ENCODE measurements at regions of chr11 and their contacts with region 1.

Region 1: DNA sequence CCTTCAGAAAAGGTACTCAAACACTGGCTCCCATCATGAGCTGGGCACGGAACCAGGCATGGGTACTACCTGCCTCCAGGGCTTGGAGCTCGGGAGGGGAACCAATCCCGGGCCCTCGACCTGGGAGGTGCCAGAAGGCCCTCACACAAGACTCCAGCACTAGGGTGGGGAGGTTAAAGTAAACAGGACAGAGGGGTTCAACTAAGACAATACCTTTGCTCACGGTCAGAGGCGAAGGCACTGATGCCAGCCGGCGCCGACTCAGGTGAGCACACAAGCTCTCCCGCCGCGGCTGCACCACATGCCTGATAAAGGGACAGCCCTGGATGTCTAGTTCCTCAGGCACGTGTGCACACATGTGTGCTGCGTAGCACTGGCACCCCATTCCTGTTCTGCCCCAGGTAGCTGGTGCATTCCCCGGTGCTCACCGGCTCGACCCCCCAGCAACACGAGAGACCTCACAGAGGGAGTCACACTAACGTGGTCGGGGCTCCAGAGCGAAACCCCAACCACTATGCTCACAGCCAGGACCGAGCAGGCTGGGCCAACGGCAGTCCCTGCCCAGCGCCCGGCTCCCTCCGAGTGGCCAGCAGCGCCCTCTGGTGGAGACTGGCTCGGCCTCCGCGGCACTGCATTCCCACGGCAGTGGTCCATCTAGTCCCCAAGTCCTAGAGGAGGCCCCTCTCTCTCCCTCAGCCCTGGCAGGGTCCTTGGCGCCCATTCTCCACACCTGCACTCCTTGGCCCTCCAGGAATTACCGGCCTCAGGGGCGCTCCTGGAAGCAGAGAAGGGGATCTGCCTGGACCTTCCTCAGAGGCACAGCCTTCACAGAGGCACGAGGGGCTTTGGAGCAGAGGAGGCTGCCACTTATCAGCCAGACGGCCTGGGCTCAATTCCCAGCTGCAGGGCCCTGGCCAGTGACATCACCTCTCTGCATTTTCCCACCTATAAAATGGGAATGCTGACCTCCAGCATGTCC is 28.8 kb upstream of the MOB2 start:
- DNase-seq: no peak
- H3K4me3 ChIP-seq: peak overlapping the region; percentile 11 to 41 (median 15)
- H3K27ac ChIP-seq: peak overlapping the region in 1 of 4 donors; percentile 34
- H3K4me1 ChIP-seq: peaks cover 50 to 99% (median 83%) of the 10 kb centered on the region in 4 donors
- H3K27me3 ChIP-seq: no peaks in the 10 kb centered on the region
- CTCF ChIP-seq: peak; percentile 88 to 98 (median 94)
- EP300 ChIP-seq: no peak
- POLR2A ChIP-seq: no peak

Region 2: DNA sequence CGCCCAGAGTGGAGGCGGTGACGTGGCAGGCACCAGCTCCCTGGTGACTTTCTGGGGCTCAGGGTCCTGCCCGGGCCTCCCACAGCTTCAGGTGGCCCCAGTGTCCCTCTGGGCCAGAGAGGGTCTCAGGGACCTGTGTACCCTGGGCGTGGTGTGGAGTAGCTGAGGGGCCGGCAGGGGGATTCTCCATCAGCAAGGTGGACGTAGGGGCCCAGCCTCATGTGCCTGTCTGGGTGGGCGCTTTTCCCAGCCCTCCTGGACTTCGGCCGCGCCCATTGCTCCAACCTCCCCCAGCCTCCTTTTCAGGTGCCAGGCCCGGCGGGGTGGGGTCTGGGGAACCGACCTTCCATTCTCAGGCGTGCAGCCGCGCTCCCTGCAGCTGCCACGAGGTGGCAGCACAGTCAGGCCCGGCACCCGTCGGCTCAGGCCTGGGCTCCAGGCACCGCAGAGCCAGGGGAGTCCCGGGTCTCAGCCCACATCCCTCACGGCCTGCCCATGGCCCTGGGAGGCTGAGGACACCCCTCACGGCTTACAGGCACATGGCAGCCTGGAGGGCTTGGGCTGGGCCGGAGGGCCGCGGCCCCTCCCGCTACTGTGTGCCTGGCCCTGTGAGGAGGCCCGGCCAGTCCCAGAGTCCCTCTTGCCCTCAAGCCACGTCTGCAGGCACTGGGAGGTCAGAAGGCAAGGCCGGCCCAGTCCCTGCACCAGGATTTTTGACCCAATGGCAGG is 312.4 kb before region 1 on chr11:
- intact Hi-C with region 1: loop called (anchors 2 kb)
- DNase-seq: no peak
- H3K4me3 ChIP-seq: no peak overlapping the region
- H3K27ac ChIP-seq: no peak overlapping the region
- H3K4me1 ChIP-seq: peaks cover 3 to 13% (median 9%) of the 10 kb centered on the region in 4 donors
- H3K27me3 ChIP-seq: peaks cover 0 to 60% (median 17%) of the 10 kb centered on the region in 4 donors
- CTCF ChIP-seq: peak; percentile 84 to 97 (median 89)
- EP300 ChIP-seq: no peak
- POLR2A ChIP-seq: no peak

Region 3: GRCh38 chr11:1335811-1336761 is 179.3 kb before region 1 on chr11:
- intact Hi-C with region 1: no loop called
- DNase-seq: peak; percentile 94
- H3K4me3 ChIP-seq: peak overlapping the region; percentile 59 to 71 (median 64)
- H3K27ac ChIP-seq: peak overlapping the region; percentile 82 to 89 (median 88)
- H3K4me1 ChIP-seq: peaks cover 17 to 27% (median 26%) of the 10 kb centered on the region in 4 donors
- H3K27me3 ChIP-seq: no peaks in the 10 kb centered on the region
- CTCF ChIP-seq: no peak
- EP300 ChIP-seq: no peak
- POLR2A ChIP-seq: peak; percentile 34

Region 4: GRCh38 chr11:1453611-1454034 is 61.7 kb before region 1 on chr11:
- intact Hi-C with region 1: loop called (anchors 2 kb)
- DNase-seq: no peak
- H3K4me3 ChIP-seq: no peak overlapping the region
- H3K27ac ChIP-seq: no peak overlapping the region
- H3K4me1 ChIP-seq: peaks cover 13 to 38% (median 25%) of the 10 kb centered on the region in 4 donors
- H3K27me3 ChIP-seq: peaks cover 0 to 23% (median 0%) of the 10 kb centered on the region in 4 donors
- CTCF ChIP-seq: peak; percentile 58 to 67 (median 61)
- EP300 ChIP-seq: no peak
- POLR2A ChIP-seq: no peak

Region 5: GRCh38 chr11:1650034-1650917 is 134.9 kb after region 1 on chr11:
- intact Hi-C with region 1: no loop called
- DNase-seq: no peak
- H3K4me3 ChIP-seq: no peak overlapping the region
- H3K27ac ChIP-seq: no peak overlapping the region
- H3K4me1 ChIP-seq: peaks cover 0 to 9% (median 8%) of the 10 kb centered on the region in 4 donors
- H3K27me3 ChIP-seq: peaks cover 0 to 18% (median 0%) of the 10 kb centered on the region in 4 donors
- CTCF ChIP-seq: no peak
- EP300 ChIP-seq: no peak
- POLR2A ChIP-seq: no peak